ENCODE measurements at regions of chr19 and their contacts with region 1.

Region 1: GRCh38 chr19:29771708-29772414 is 39.9 kb upstream of the CCNE1 start:
- DNase-seq: peak; percentile 43
- ATAC-seq: peak; percentile 96
- H3K4me3 ChIP-seq: no peak overlapping the region
- H3K27ac ChIP-seq: no peak overlapping the region
- H3K4me1 ChIP-seq: peaks cover 3 to 8% of the 10 kb centered on the region in 2 experiments; a peak in 2 of 4 replicates
- H3K27me3 ChIP-seq: no peaks in the 10 kb centered on the region
- CTCF ChIP-seq: peak; percentile 31 to 89 (median 74); a peak in 4 of 6 replicates
- POLR2A ChIP-seq: no peak
- RAD21 ChIP-seq: peak; percentile 58

Region 2: GRCh38 chr19:29761575-29762232 is 10.2 kb before region 1 on chr19:
- CTCF ChIA-PET with region 1: interaction called, 11 read pairs
- POLR2A ChIA-PET with region 1: no interaction called
- RAD21 ChIA-PET with region 1: no interaction called
- intact Hi-C with region 1: no loop called
- DNase-seq: no peak
- ATAC-seq: no peak
- H3K4me3 ChIP-seq: no peak overlapping the region
- H3K27ac ChIP-seq: no peak overlapping the region
- H3K4me1 ChIP-seq: peaks cover 0 to 10% of the 10 kb centered on the region in 2 experiments; a peak in 2 of 4 replicates
- H3K27me3 ChIP-seq: no peaks in the 10 kb centered on the region
- CTCF ChIP-seq: no peak
- POLR2A ChIP-seq: no peak
- RAD21 ChIP-seq: no peak